Astrocyte of the cerebellum (primary cell): ENCODE measurements at regions of chr7 and their contacts with region 1.

Region 1: DNA sequence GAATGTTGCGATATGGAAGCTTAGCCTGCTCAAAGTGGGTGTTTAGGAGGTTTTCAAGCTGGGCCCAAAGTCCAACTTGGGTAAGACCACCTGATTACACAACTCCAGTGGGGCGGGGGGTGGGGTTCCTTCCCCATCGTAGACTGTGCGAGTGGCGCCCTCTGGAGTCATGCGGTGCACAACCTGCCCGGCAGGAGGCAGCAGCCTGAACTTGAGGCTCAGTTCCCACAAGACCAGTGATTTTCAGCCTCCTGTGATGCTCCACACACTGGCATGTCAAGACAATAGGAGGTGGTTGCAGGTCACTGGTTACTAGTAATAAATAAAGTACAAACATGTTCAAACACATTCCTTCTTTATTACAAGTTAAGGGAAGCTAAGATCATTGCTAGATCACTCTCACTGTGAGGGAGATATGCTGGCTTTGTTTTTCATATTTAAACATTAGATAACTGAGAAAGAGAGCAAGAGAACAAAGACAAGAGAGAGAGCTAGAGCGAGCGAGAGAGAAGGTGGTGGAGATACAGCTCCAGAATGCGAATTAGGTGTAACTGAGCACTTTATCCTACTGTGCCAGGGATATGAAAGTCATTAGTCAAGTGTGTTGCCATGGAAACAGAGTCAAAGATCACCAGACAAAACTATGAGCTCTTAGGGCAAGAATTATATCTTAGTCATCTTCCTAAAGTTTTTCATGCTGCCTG is 97.4 kb upstream of the BMPER start:
- DNase-seq: peak; percentile 73
- H3K4me3 ChIP-seq: no peak overlapping the region
- CTCF ChIP-seq: peak; percentile 62

Region 2: GRCh38 chr7:33895025-33895804 is 87.3 kb after region 1 on chr7:
- in situ Hi-C with region 1: loop called (anchors 5 kb)
- DNase-seq: no peak
- H3K4me3 ChIP-seq: no peak overlapping the region
- CTCF ChIP-seq: peak; percentile 91